ENCODE measurements at regions of chr17 and their contacts with region 1.

Region 1: GRCh38 chr17:75412455-75413317 is 7.2 kb upstream of the GRB2 start:
- DNase-seq: peak; percentile 81
- H3K4me3 ChIP-seq: peak overlapping the region; percentile 3 to 35; a peak in 3 of 4 replicates
- H3K27ac ChIP-seq: no peak overlapping the region
- H3K4me1 ChIP-seq: no peaks in the 10 kb centered on the region
- H3K27me3 ChIP-seq: peaks cover 22% of the 10 kb centered on the region
- CTCF ChIP-seq: peak; percentile 92
- EP300 ChIP-seq: no peak
- RAD21 ChIP-seq: peak; percentile 96

Region 2: DNA sequence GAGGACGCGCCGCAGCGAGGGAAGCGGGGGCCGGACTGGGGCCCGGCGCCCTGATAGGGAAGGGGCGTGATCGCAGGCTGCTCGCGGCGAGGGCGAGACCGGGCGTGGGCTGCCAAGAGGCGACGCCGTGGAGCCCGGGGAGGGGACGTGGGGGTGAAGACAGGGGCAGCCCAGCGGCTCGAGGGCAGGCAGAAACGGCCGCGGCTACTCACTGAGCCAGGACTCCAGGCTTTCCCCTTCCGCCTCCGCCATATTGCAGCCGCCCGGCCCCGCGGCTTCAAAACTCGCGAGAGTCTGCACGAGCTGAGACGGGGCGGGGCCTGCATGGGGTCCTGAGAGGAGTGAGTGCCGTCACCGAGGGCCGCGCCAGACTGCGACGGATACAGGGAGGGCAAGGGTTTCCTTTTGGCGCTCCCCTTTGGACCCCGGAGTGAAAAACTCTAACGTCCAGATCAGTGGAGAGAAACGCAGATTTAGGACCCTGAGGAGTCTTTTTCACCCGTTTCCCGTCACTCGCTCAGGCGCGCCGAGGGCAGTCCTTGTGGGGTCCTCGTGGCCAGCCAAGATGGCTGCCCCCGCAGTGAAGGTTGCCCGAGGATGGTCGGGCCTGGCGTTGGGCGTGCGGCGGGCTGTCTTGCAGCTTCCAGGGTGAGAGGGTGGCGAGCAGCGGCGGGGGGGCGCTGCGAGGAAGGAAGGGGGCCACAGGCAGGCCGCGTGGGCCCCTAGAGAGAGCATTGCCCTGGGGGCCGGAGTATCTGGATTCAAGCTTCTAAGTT is 151.2 kb before region 1 on chr17 and contains the starts of genes GGA3 and MRPS7:
- CTCF ChIA-PET with region 1: interaction called, 26 read pairs
- POLR2A ChIA-PET with region 1: no interaction called
- DNase-seq: peak; percentile 100
- H3K4me3 ChIP-seq: peak within 1 kb of the TSS; percentile 88 to 99
- H3K27ac ChIP-seq: peak within 1 kb of the TSS; percentile 96 to 98
- H3K4me1 ChIP-seq: peaks cover 4 to 21% of the 10 kb centered on the region in 2 experiments; a peak in 2 of 4 replicates
- H3K27me3 ChIP-seq: no peaks in the 10 kb centered on the region
- CTCF ChIP-seq: no peak
- EP300 ChIP-seq: no peak
- RAD21 ChIP-seq: no peak
- polyA plus RNA-seq, gene GGA3: 42.5 and 43.7 TPM in 2 replicates
- polyA plus RNA-seq, gene MRPS7: 82.8 and 90.4 TPM in 2 replicates

Region 3: GRCh38 chr17:75313941-75314551 is 98.6 kb before region 1 on chr17:
- CTCF ChIA-PET with region 1: interaction called, 83 read pairs
- POLR2A ChIA-PET with region 1: interaction called, 4 read pairs
- DNase-seq: no peak
- H3K4me3 ChIP-seq: no peak overlapping the region
- H3K27ac ChIP-seq: no peak overlapping the region
- H3K4me1 ChIP-seq: no peaks in the 10 kb centered on the region
- H3K27me3 ChIP-seq: no peaks in the 10 kb centered on the region
- CTCF ChIP-seq: no peak
- EP300 ChIP-seq: no peak
- RAD21 ChIP-seq: no peak

Region 4: DNA sequence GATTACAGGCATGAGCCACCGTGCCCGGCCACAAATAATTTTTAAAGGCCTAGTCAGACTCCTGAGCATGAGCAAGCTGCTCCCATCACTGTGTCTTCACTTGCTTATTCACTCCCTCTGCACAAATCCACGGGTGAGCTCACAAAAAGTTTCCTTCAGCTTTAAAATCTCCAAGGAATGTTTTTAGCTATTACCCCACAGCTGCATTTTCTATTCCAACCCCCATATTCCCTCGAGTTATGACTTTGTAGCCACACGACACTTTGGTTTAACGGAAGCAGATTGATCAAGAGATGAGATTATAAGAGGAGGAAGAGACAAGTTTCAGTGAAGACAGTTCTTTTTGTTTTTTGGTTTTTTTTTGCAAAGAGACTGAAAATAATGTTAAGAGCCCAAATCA is 74.4 kb before region 1 on chr17:
- CTCF ChIA-PET with region 1: interaction called, 23 read pairs
- POLR2A ChIA-PET with region 1: no interaction called
- DNase-seq: no peak
- H3K4me3 ChIP-seq: no peak overlapping the region
- H3K27ac ChIP-seq: peak overlapping the region in 1 of 2 experiments; percentile 19; a peak in 1 of 4 replicates
- H3K4me1 ChIP-seq: peaks cover 6 to 9% of the 10 kb centered on the region in 2 experiments; a peak in 3 of 4 replicates
- H3K27me3 ChIP-seq: no peaks in the 10 kb centered on the region
- CTCF ChIP-seq: no peak
- EP300 ChIP-seq: no peak
- RAD21 ChIP-seq: no peak

Region 5: GRCh38 chr17:75430159-75430974 is 17.7 kb after region 1 on chr17:
- CTCF ChIA-PET with region 1: interaction called, 19 read pairs
- POLR2A ChIA-PET with region 1: no interaction called
- DNase-seq: no peak
- H3K4me3 ChIP-seq: no peak overlapping the region
- H3K27ac ChIP-seq: no peak overlapping the region
- H3K4me1 ChIP-seq: no peaks in the 10 kb centered on the region; a peak in 1 of 4 replicates
- H3K27me3 ChIP-seq: no peaks in the 10 kb centered on the region
- CTCF ChIP-seq: no peak
- EP300 ChIP-seq: no peak
- RAD21 ChIP-seq: no peak